Natural killer cell (primary cell): ENCODE measurements at regions of chr9 and their contacts with region 1.

Region 1: GRCh38 chr9:126228781-126229444 is 97.7 kb upstream of the MVB12B start:
- DNase-seq: peak; percentile 48 to 78
- ATAC-seq: peak; percentile 82 to 97 (median 86)
- H3K4me3 ChIP-seq: no peak overlapping the region
- H3K4me3 Mint-ChIP-seq: no peak overlapping the region
- H3K27ac ChIP-seq: no peak overlapping the region
- H3K27ac Mint-ChIP-seq: no peak overlapping the region
- H3K4me1 ChIP-seq: no peaks in the 10 kb centered on the region
- H3K4me1 Mint-ChIP-seq: peaks cover 0 to 5% of the 10 kb centered on the region in 2 donors
- H3K27me3 ChIP-seq: peaks cover 2% of the 10 kb centered on the region
- H3K27me3 Mint-ChIP-seq: peaks cover 15 to 32% of the 10 kb centered on the region in 2 donors
- CTCF ChIP-seq: peak; percentile 84

Region 2: GRCh38 chr9:124721109-124721906 is 1507.6 kb before region 1 on chr9:
- intact Hi-C with region 1: no loop called
- DNase-seq: no peak
- ATAC-seq: no peak
- H3K4me3 ChIP-seq: no peak overlapping the region
- H3K4me3 Mint-ChIP-seq: no peak overlapping the region
- H3K27ac ChIP-seq: no peak overlapping the region
- H3K27ac Mint-ChIP-seq: no peak overlapping the region
- H3K4me1 ChIP-seq: no peaks in the 10 kb centered on the region
- H3K4me1 Mint-ChIP-seq: no peaks in the 10 kb centered on the region
- H3K27me3 ChIP-seq: no peaks in the 10 kb centered on the region
- H3K27me3 Mint-ChIP-seq: no peaks in the 10 kb centered on the region
- CTCF ChIP-seq: no peak

Region 3: DNA sequence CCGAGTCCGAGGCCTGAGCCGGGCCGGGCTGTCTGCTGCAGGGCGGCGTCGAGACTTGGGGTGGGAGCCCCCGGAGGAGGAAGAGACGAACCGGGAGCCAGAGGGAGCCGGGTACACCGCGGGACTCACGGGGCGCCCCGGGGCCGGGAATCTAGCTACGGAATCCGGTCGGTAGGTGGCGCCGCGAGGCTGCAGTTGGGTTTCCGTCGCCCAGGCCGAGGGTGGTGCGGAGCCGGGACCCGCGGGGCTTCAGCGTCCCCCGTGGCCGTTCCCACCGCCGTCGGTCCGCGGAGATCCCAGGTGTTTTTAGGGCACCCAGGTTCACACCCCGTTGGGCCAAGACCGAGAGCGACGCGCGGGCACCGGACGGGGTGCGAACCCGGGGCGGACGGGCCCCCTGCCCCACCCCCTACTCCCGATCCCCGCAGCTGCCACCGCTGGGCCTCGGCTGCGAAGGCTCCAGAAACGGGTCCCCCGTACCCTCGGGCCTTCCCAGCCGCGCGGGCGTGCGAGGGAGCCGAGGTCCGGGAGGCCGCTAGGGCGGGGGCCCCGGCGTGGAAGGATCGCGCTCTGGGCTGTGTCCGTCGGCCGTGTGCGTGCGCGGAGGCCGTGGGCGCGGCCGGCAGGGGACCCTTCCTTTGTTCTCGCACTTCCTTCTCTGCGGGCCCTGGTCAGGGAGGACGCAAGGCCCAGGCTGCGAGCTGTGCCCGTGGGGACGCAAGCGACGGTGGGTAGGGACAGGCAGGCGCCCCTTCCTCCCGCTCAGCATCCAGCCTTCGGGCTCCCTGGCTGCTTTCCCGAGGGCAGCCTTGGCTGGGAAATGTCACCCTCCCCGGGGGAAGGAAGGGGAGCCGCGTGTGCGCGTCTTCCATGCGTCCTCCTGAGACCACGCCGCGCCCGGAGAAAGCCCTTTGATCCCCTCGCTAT is 820.7 kb before region 1 on chr9:
- intact Hi-C with region 1: loop called (anchors 1 kb)
- DNase-seq: peak; percentile 60 to 85
- ATAC-seq: peak; percentile 74 to 84 (median 83)
- H3K4me3 ChIP-seq: peak overlapping the region; percentile 33
- H3K4me3 Mint-ChIP-seq: peak overlapping the region; percentile 87
- H3K27ac ChIP-seq: no peak overlapping the region
- H3K27ac Mint-ChIP-seq: no peak overlapping the region
- H3K4me1 ChIP-seq: peaks cover 13% of the 10 kb centered on the region
- H3K4me1 Mint-ChIP-seq: peaks cover 6 to 20% of the 10 kb centered on the region in 2 donors
- H3K27me3 ChIP-seq: peaks cover 7% of the 10 kb centered on the region
- H3K27me3 Mint-ChIP-seq: peaks cover 14 to 28% of the 10 kb centered on the region in 2 donors
- CTCF ChIP-seq: peak; percentile 73

Region 4: GRCh38 chr9:125558453-125559092 is 670.3 kb before region 1 on chr9:
- intact Hi-C with region 1: loop called (anchors 2 kb)
- DNase-seq: peak; percentile 25 to 77
- ATAC-seq: peak; percentile 63 to 84 (median 75)
- H3K4me3 ChIP-seq: no peak overlapping the region
- H3K4me3 Mint-ChIP-seq: no peak overlapping the region
- H3K27ac ChIP-seq: no peak overlapping the region
- H3K27ac Mint-ChIP-seq: no peak overlapping the region
- H3K4me1 ChIP-seq: no peaks in the 10 kb centered on the region
- H3K4me1 Mint-ChIP-seq: peaks cover 12 to 16% of the 10 kb centered on the region in 2 donors
- H3K27me3 ChIP-seq: no peaks in the 10 kb centered on the region
- H3K27me3 Mint-ChIP-seq: no peaks in the 10 kb centered on the region
- CTCF ChIP-seq: peak; percentile 73

Region 5: GRCh38 chr9:126217797-126218196 is 11.1 kb before region 1 on chr9:
- intact Hi-C with region 1: no loop called
- DNase-seq: no peak
- ATAC-seq: no peak
- H3K4me3 ChIP-seq: no peak overlapping the region
- H3K4me3 Mint-ChIP-seq: no peak overlapping the region
- H3K27ac ChIP-seq: no peak overlapping the region
- H3K27ac Mint-ChIP-seq: no peak overlapping the region
- H3K4me1 ChIP-seq: peaks cover 4% of the 10 kb centered on the region
- H3K4me1 Mint-ChIP-seq: no peaks in the 10 kb centered on the region
- H3K27me3 ChIP-seq: peaks cover 14% of the 10 kb centered on the region
- H3K27me3 Mint-ChIP-seq: peaks cover 52 to 71% of the 10 kb centered on the region in 2 donors
- CTCF ChIP-seq: no peak